Heart right ventricle (tissue), 16 donors: ENCODE measurements at regions of chr1 and their contacts with region 1.

Region 1: GRCh38 chr1:61077676-61078541 is 4.5 kb upstream of the NFIA start:
- DNase-seq: peak; percentile 84 to 97
- ATAC-seq: peak; percentile 74 to 91 (median 86)
- H3K4me3 ChIP-seq: peak overlapping the region; percentile 47 to 77 (median 66)
- H3K27ac ChIP-seq: peak overlapping the region; percentile 71 to 99 (median 94)
- H3K4me1 ChIP-seq: peaks cover 16 to 45% (median 39%) of the 10 kb centered on the region in 9 donors
- H3K27me3 ChIP-seq: no peaks in the 10 kb centered on the region
- CTCF ChIP-seq: peak in 1 of 9 donors; percentile 25

Region 2: DNA sequence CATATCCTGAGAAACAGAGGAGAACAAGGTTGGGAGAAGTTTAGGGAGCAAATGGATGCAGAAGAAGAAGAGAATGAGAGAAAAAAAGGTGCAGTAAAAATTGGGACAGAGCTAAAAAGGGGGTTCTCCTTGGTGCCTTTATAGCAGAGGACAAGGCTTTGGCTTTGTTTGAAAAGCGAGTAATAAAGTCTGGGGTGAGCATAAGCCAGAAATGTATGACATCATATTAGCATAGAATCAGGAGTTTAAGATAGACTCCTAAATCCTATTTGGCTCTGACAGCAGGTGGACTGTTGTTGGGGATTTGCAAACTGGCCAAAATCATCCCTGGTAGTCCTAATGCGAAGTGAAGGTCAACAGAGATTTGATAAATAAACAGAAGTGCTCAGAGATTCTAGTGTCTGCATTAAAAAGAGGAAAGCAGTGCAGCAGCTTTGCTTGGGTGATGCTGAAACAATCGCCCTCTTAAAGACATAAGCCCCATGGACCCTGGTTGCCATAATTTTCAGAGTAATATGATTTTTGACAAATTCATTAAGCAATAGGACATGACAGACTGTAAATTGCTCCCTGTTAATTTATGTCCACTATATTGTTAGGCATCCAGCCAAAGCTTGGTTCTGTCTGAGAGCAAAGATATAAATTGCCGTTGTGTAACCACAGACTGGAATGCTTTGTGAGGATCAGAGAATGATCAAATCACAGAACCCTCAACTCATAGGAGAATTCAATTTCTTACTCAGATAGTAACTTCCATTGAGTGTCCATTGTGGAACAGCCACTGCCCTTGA is 380.5 kb before region 1 on chr1:
- intact Hi-C with region 1: no loop called
- DNase-seq: no peak
- ATAC-seq: no peak
- H3K4me3 ChIP-seq: no peak overlapping the region
- H3K27ac ChIP-seq: no peak overlapping the region
- H3K4me1 ChIP-seq: peaks cover 0 to 15% (median 8%) of the 10 kb centered on the region in 9 donors
- H3K27me3 ChIP-seq: no peaks in the 10 kb centered on the region
- CTCF ChIP-seq: no peak

Region 3: DNA sequence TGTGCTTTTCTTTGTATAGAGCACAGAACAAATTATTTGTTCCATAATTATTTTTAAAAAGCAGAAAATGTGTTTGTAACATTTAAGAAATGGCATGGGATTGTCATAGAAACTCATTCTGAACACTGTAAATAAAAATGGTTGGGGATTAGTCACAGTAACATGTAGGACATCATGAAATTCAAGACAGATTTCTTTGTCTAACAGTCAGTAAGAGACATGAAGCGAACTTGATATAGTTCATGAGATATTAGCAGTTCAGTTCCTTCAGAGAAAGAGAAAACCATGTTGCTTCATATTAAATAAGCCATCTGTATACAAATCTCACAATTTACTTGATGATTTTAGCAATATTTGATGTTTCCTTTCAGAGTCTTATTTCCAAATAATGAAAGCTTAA is 24.1 kb after region 1 on chr1:
- intact Hi-C with region 1: loop called in 1 of 10 experiments (anchors 2 kb)
- DNase-seq: no peak
- ATAC-seq: peak in 3 of 8 donors; percentile 16 to 47 (median 25)
- H3K4me3 ChIP-seq: peak overlapping the region in 9 of 10 donors; percentile 1 to 44 (median 38)
- H3K27ac ChIP-seq: peak overlapping the region in 9 of 10 donors; percentile 36 to 84 (median 63)
- H3K4me1 ChIP-seq: peaks cover 8 to 90% (median 77%) of the 10 kb centered on the region in 9 donors
- H3K27me3 ChIP-seq: no peaks in the 10 kb centered on the region
- CTCF ChIP-seq: no peak

Region 4: DNA sequence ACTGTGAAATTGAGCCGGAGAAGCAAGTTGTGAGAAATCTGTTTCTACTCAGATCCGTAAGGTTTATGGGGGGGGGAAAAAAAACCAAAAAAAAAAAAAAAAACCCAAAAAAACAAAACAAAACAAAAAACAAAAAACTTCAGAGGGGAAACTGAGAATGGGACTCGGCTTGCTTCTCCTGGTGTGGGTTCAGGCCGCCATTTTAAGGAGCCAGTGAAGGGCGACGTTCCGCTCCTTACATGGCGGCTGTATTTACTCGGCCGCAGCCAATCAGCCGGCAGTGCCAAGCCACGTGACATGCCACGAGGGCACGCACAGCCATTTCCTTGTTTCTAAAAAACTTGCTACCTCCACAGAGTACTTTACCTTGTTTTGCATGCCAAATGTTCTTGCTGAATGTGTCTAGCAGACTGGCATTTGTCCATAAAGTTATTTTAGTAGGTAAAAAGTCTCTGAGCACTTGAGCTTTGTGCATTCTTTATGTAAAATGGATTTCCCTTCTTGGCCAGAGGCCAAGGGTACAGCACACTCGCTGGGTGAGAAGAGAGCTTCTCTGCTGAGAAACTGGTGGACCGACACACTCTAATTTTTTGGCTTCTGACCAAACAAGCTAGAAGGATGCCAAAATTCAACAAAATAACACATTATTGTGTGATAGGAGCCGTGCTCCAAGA is 106.3 kb after region 1 on chr1:
- intact Hi-C with region 1: loop called in 7 of 10 experiments (anchors 2 to 10 kb)
- DNase-seq: peak; percentile 92 to 95
- ATAC-seq: peak; percentile 93 to 98 (median 94)
- H3K4me3 ChIP-seq: peak overlapping the region in 9 of 10 donors; percentile 18 to 57 (median 48)
- H3K27ac ChIP-seq: peak overlapping the region; percentile 72 to 96 (median 88)
- H3K4me1 ChIP-seq: peaks cover 12 to 83% (median 67%) of the 10 kb centered on the region in 9 donors
- H3K27me3 ChIP-seq: no peaks in the 10 kb centered on the region
- CTCF ChIP-seq: no peak

Region 5: GRCh38 chr1:61301824-61302657 is 224.1 kb after region 1 on chr1:
- intact Hi-C with region 1: no loop called
- DNase-seq: no peak
- ATAC-seq: peak; percentile 60 to 96 (median 77)
- H3K4me3 ChIP-seq: no peak overlapping the region
- H3K27ac ChIP-seq: peak overlapping the region in 9 of 10 donors; percentile 41 to 86 (median 65)
- H3K4me1 ChIP-seq: peaks cover 2 to 62% (median 42%) of the 10 kb centered on the region in 9 donors
- H3K27me3 ChIP-seq: no peaks in the 10 kb centered on the region
- CTCF ChIP-seq: no peak

Region 6: GRCh38 chr1:61337981-61338848 is 260.3 kb after region 1 on chr1:
- intact Hi-C with region 1: loop called in 6 of 10 experiments (anchors 2 to 10 kb)
- DNase-seq: peak; percentile 48 to 74
- ATAC-seq: peak; percentile 69 to 90 (median 87)
- H3K4me3 ChIP-seq: peak overlapping the region in 6 of 10 donors; percentile 11 to 28 (median 19)
- H3K27ac ChIP-seq: peak overlapping the region; percentile 44 to 86 (median 75)
- H3K4me1 ChIP-seq: peaks cover 8 to 64% (median 44%) of the 10 kb centered on the region in 9 donors
- H3K27me3 ChIP-seq: no peaks in the 10 kb centered on the region
- CTCF ChIP-seq: peak; percentile 19 to 80 (median 63)